AG04450 (cell line): ENCODE measurements at regions of chr11 and their contacts with region 1.

Region 1: GRCh38 chr11:35391922-35392813 is 27.2 kb downstream of the SLC1A2 start:
- DNase-seq: peak; percentile 72
- H3K4me3 ChIP-seq: no peak overlapping the region
- H3K27ac ChIP-seq: peak overlapping the region; percentile 43
- H3K27me3 ChIP-seq: no peaks in the 10 kb centered on the region
- CTCF ChIP-seq: peak; percentile 86

Region 2: DNA sequence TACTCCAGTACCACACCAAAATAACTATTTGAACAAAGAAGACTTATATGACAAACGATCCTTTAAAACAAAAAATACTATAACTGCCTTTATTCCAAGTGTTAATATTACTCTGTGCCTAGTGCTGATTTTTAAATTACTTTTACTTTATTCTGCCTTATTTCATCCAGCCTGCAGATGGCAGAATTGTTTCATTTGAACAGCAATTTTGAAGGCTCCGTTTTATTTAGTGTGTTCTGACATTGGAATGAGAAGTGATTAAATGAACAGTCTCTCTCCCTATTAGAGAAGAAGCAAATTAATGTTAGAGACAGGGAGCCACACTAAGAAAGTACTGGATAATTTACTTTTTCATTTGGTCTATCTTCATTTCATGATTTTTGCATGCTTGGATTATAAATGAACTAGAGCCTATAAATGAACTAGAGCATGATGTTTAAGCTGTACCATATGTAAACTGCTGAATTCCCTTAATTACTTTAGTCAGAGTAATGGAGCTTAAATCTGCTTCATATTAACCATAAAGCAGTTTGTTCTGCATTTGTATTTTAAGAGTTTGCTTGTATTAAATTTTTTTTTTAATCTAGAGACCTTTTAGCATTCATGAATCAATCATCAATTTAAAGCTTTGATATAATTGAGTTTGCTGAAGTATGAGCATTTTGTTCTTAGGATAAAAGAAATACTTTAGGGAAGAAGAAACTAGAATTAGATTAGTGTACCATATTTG is 465.9 kb before region 1 on chr11:
- CTCF ChIA-PET with region 1: interaction called, 140 read pairs
- POLR2A ChIA-PET with region 1: no interaction called
- DNase-seq: no peak
- H3K4me3 ChIP-seq: no peak overlapping the region
- H3K27ac ChIP-seq: no peak overlapping the region
- H3K27me3 ChIP-seq: no peaks in the 10 kb centered on the region
- CTCF ChIP-seq: peak; percentile 70

Region 3: GRCh38 chr11:34999453-34999852 is 392.7 kb before region 1 on chr11:
- CTCF ChIA-PET with region 1: interaction called, 11 read pairs
- POLR2A ChIA-PET with region 1: no interaction called
- DNase-seq: no peak
- H3K4me3 ChIP-seq: no peak overlapping the region
- H3K27ac ChIP-seq: no peak overlapping the region
- H3K27me3 ChIP-seq: no peaks in the 10 kb centered on the region
- CTCF ChIP-seq: no peak

Region 4: GRCh38 chr11:35013514-35014233 is 378.5 kb before region 1 on chr11:
- CTCF ChIA-PET with region 1: interaction called, 10 read pairs
- POLR2A ChIA-PET with region 1: no interaction called
- DNase-seq: no peak
- H3K4me3 ChIP-seq: no peak overlapping the region
- H3K27ac ChIP-seq: no peak overlapping the region
- H3K27me3 ChIP-seq: no peaks in the 10 kb centered on the region
- CTCF ChIP-seq: no peak

Region 5: GRCh38 chr11:35182317-35182939 is 209.7 kb before region 1 on chr11:
- CTCF ChIA-PET with region 1: interaction called, 12 read pairs
- POLR2A ChIA-PET with region 1: no interaction called
- DNase-seq: no peak
- H3K4me3 ChIP-seq: no peak overlapping the region
- H3K27ac ChIP-seq: peak overlapping the region; percentile 43
- H3K27me3 ChIP-seq: no peaks in the 10 kb centered on the region
- CTCF ChIP-seq: no peak

Region 6: GRCh38 chr11:35192347-35192746 is 199.8 kb before region 1 on chr11:
- CTCF ChIA-PET with region 1: interaction called, 12 read pairs
- POLR2A ChIA-PET with region 1: no interaction called
- DNase-seq: no peak
- H3K4me3 ChIP-seq: no peak overlapping the region
- H3K27ac ChIP-seq: peak overlapping the region; percentile 41
- H3K27me3 ChIP-seq: no peaks in the 10 kb centered on the region
- CTCF ChIP-seq: 0 out of 2 replicates have a peak, but pooled peaks have one; percentile 2

Region 7: DNA sequence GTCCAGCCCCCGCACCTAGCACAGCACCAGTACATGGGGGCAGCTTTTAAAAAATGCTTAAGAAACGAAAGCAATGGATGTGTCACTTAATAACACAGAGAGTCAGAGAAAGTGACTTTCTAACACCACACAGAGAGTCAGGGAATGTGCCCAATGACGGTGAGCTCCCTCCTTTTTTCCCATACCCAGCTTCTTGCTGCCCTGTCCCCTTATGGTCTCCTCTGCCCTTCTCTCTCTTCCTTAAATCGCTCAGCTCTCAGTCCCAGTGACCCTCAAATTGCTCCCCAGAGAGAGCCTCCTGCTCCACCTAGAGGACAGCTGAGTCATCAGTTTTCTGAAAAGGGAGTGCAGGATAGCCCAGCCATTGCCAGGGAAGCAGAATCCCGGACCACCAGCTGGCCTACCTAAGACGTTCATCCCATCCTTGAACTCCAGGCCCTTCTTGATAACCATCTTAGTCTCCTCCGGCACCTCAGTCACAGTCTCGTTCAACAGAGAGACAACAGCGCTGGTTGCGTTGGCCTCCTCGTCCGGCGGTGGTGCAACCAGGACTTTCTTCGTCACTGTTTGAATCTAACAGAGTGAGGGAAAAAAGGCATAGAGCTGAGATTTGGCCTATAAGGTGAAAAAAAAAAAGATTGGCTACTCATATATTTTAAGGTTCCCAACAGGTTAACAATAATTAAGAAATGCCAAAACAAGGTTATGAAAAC is 86.3 kb before region 1 on chr11:
- CTCF ChIA-PET with region 1: interaction called, 12 read pairs
- POLR2A ChIA-PET with region 1: no interaction called
- DNase-seq: no peak
- H3K4me3 ChIP-seq: no peak overlapping the region
- H3K27ac ChIP-seq: no peak overlapping the region
- H3K27me3 ChIP-seq: no peaks in the 10 kb centered on the region
- CTCF ChIP-seq: peak; percentile 68

Region 8: DNA sequence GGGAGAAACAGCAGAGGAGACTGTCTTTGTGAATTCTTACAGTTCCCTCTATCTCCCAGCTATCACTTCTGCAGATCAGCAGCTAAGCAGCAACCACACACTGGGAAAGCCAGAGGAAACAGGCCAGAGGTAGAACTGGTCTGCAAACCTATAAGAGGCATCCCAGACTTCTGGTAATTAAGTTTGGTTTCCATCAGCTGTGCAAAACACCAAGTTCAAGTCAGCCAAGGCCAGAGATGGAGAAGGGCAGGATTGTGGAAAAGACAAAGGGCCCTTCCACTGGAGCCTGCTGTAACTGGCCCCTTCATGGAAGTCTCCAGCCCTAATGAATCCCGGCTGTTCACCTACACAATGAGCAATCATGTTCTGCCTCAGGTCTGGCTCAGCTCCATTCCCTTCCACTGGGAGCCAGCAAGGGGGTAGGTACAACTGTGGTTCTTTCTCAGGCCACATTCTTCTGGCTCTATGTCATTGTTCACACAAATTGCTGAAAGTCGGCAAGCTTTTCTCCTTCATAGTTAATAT is 137.9 kb after region 1 on chr11:
- CTCF ChIA-PET with region 1: no interaction called
- POLR2A ChIA-PET with region 1: no interaction called
- DNase-seq: peak; percentile 92
- H3K4me3 ChIP-seq: no peak overlapping the region
- H3K27ac ChIP-seq: peak overlapping the region; percentile 94
- H3K27me3 ChIP-seq: no peaks in the 10 kb centered on the region
- CTCF ChIP-seq: no peak